MCF 10A (cell line): ENCODE measurements at regions of chr4 and their contacts with region 1.

Region 1: DNA sequence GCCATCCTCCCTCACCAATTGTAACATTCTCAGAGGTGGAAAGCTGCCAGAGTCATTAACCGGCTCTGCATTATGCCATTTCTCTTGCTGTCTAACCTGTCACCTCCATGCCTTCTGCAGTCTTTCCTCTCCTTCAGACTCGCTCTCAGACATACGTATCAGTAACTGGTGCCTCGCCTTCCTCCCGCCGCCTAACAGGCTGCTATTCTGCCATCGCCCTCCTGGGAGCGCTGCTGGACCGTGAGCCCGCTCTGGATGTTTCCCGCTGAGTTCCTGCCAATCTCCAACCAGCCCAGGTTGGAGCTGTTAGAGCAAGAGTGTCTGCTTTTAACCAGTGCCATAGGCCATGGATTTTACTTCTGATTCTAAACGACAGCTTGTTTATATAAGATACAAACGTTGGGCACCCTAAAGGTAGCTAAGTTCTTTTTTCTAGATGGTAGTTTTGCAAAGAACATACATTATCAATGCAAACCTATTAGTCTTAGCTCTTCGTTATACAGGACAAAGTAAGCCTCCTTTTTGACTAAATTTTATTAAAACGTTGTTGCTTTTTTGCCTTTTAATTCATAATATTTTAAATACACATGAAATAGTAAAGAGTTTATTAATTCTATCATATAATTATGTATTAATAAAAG is 59.5 kb upstream of the NEIL3 start:
- DNase-seq: peak; percentile 80
- H3K4me3 Mint-ChIP-seq: peak overlapping the region; percentile 18
- H3K27ac Mint-ChIP-seq: no peak overlapping the region
- H3K4me1 Mint-ChIP-seq: peaks cover 6% of the 10 kb centered on the region
- H3K27me3 Mint-ChIP-seq: no peaks in the 10 kb centered on the region
- CTCF ChIP-seq: peak; percentile 98

Region 2: GRCh38 chr4:176377780-176378179 is 872.4 kb before region 1 on chr4:
- CTCF ChIA-PET with region 1: interaction called, 9 read pairs
- POLR2A ChIA-PET with region 1: no interaction called
- intact Hi-C with region 1: loop called (anchors 2 kb)
- DNase-seq: peak; percentile 40
- H3K4me3 Mint-ChIP-seq: no peak overlapping the region
- H3K27ac Mint-ChIP-seq: no peak overlapping the region
- H3K4me1 Mint-ChIP-seq: peaks cover 8% of the 10 kb centered on the region
- H3K27me3 Mint-ChIP-seq: no peaks in the 10 kb centered on the region
- CTCF ChIP-seq: peak; percentile 72

Region 3: DNA sequence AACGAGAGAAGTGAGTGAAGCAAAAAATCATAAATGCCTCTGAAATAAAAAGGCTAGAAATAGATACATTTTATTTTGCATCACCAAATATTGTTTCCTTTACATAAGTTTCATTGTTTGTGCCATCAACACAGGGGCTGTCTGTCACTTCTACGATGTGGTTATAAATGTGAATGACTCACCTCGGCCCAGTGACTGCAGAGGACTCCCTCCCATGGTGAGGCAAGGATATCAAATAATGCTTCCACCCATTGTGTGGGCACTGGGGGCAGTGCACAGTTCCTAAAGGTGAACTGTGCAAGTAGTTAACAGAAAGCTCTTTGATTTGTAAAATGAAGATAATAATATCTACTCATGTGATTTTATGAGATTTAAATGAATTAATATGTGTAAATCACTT is 170.8 kb before region 1 on chr4:
- CTCF ChIA-PET with region 1: no interaction called
- POLR2A ChIA-PET with region 1: no interaction called
- intact Hi-C with region 1: no loop called
- DNase-seq: peak; percentile 16
- H3K4me3 Mint-ChIP-seq: no peak overlapping the region
- H3K27ac Mint-ChIP-seq: no peak overlapping the region
- H3K4me1 Mint-ChIP-seq: no peaks in the 10 kb centered on the region
- H3K27me3 Mint-ChIP-seq: no peaks in the 10 kb centered on the region
- CTCF ChIP-seq: no peak

Region 4: DNA sequence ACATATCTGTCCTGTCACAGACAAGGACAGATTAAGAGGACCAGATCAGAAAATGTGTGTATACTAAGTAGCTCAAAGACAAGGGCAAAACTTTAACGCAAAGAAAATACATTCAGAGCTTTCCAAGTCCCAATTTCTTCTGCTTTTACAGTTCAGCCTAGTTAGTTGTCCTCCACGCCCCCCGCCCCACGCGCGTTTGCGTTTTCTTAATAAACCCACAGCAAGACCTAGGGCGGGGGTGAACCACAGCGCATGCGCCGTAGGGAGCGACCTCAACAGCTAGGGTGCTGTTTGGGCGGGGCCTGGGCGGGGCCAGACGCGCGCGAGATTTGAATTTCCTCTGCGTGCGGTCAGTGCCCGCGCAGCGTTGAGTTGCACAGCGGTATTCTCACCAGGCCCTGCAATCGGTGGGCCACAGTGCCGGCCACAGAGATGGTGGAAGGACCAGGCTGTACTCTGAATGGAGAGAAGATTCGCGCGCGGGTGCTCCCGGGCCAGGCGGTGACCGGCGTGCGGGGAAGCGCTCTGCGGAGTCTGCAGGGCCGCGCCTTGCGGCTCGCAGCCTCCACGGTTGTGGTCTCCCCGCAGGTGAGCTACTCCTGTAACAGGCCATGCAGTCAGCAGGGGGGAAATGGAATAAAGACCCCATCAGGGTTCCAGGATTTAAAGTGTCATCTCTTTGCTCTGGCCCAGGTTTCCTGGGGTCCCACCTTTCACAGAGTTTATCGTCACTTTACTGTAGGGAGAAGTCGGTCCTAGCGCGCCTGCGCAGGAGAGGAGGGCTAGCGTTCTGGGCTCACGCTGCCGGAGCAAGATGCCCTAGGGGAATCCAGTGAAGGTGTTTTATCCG is 59.6 kb after region 1 on chr4 and contains the start of gene NEIL3:
- CTCF ChIA-PET with region 1: interaction called, 17 read pairs
- POLR2A ChIA-PET with region 1: no interaction called
- intact Hi-C with region 1: no loop called
- DNase-seq: peak; percentile 93
- H3K4me3 Mint-ChIP-seq: peak within 1 kb of the TSS; percentile 93
- H3K27ac Mint-ChIP-seq: peak within 1 kb of the TSS; percentile 85
- H3K4me1 Mint-ChIP-seq: peaks cover 29% of the 10 kb centered on the region
- H3K27me3 Mint-ChIP-seq: no peaks in the 10 kb centered on the region
- CTCF ChIP-seq: no peak
- total RNA-seq, gene NEIL3: 3.4 and 5.8 TPM in 2 replicates

Region 5: GRCh38 chr4:177339477-177340374 is 89.5 kb after region 1 on chr4:
- CTCF ChIA-PET with region 1: interaction called, 220 read pairs
- POLR2A ChIA-PET with region 1: interaction called, 23 read pairs
- intact Hi-C with region 1: loop called (anchors 1 kb)
- DNase-seq: peak; percentile 55
- H3K4me3 Mint-ChIP-seq: no peak overlapping the region
- H3K27ac Mint-ChIP-seq: peak overlapping the region; percentile 46
- H3K4me1 Mint-ChIP-seq: peaks cover 11% of the 10 kb centered on the region
- H3K27me3 Mint-ChIP-seq: no peaks in the 10 kb centered on the region
- CTCF ChIP-seq: peak; percentile 73

Region 6: GRCh38 chr4:177555007-177555574 is 304.9 kb after region 1 on chr4:
- CTCF ChIA-PET with region 1: interaction called, 3 read pairs
- POLR2A ChIA-PET with region 1: no interaction called
- intact Hi-C with region 1: loop called (anchors 5 kb)
- DNase-seq: peak; percentile 61
- H3K4me3 Mint-ChIP-seq: no peak overlapping the region
- H3K27ac Mint-ChIP-seq: no peak overlapping the region
- H3K4me1 Mint-ChIP-seq: no peaks in the 10 kb centered on the region
- H3K27me3 Mint-ChIP-seq: no peaks in the 10 kb centered on the region
- CTCF ChIP-seq: peak; percentile 77